ENCODE measurements at regions of chr22 and their contacts with region 1.

Region 1: DNA sequence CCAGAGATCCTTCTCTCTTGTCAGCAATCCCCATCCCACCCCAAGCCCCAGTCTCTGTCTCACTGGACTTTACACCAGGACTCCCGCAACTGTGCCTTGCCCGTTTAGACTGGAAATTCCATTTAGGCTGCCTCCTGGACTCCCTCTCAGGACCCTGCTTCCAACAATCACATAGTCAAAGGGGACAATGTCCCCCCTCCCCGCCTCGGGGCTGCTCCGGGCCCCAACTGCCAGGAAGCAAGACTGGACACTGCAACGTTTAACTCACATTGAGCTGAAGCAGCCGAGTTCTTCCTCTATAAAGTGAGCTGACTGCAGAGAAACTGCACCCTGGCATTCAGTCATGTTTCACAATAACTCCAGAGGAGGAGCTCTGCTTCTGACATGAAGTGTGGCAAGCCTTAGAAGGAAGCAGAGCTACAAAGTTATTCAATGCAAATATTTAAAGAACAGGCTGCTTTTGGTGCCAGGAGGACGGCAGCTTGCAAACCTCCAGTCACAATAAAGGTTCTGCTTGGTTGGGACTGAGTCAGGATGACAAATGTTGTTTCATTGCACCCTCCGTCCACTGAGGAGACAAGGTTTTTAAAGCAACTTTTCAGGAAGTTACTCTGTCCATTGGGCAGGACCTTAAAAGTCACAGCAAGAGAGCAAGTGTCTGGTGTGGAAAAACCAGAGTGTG is 19.9 kb downstream of the PACSIN2 start:
- DNase-seq: peak; percentile 98
- ATAC-seq: peak; percentile 72
- H3K4me3 ChIP-seq: peak overlapping the region; percentile 47 to 81 (median 64)
- H3K27ac ChIP-seq: peak overlapping the region; percentile 100
- H3K4me1 ChIP-seq: peaks cover 96% of the 10 kb centered on the region
- H3K27me3 ChIP-seq: no peaks in the 10 kb centered on the region
- CTCF ChIP-seq: peak; percentile 20; the same call in 1 of the 2 replicates
- EP300 ChIP-seq: peak in 1 of 2 experiments; percentile 90; a peak in 2 of 4 replicates
- POLR2A ChIP-seq: peak; percentile 37 to 86; a peak in 3 of 4 replicates
- RAD21 ChIP-seq: 0 out of 2 replicates have a peak, but pooled peaks have one; percentile 4

Region 2: GRCh38 chr22:42947211-42947990 is 47.6 kb before region 1 on chr22:
- CTCF ChIA-PET with region 1: no interaction called
- POLR2A ChIA-PET with region 1: interaction called, 13 read pairs
- in situ Hi-C with region 1: loop called (anchors 5 kb)
- intact Hi-C with region 1: loop called (anchors 10 kb)
- DNase-seq: peak; percentile 87
- ATAC-seq: peak; percentile 80
- H3K4me3 ChIP-seq: peak overlapping the region in 1 of 3 experiments; percentile 7; a peak in 2 of 6 replicates
- H3K27ac ChIP-seq: peak overlapping the region; percentile 57
- H3K4me1 ChIP-seq: peaks cover 70% of the 10 kb centered on the region
- H3K27me3 ChIP-seq: no peaks in the 10 kb centered on the region
- CTCF ChIP-seq: 0 out of 2 replicates have a peak, but pooled peaks have one; percentile 3
- EP300 ChIP-seq: peak in 1 of 2 experiments; percentile 67; a peak in 2 of 4 replicates
- POLR2A ChIP-seq: no peak
- RAD21 ChIP-seq: no peak

Region 3: GRCh38 chr22:42964994-42965699 is 29.9 kb before region 1 on chr22:
- CTCF ChIA-PET with region 1: no interaction called
- POLR2A ChIA-PET with region 1: interaction called, 45 read pairs
- in situ Hi-C with region 1: no loop called
- intact Hi-C with region 1: no loop called
- DNase-seq: peak; percentile 77
- ATAC-seq: peak; percentile 36
- H3K4me3 ChIP-seq: no peak overlapping the region
- H3K27ac ChIP-seq: peak overlapping the region; percentile 19
- H3K4me1 ChIP-seq: peaks cover 82% of the 10 kb centered on the region
- H3K27me3 ChIP-seq: no peaks in the 10 kb centered on the region
- CTCF ChIP-seq: no peak
- EP300 ChIP-seq: peak in 1 of 2 experiments; percentile 59; a peak in 2 of 4 replicates
- POLR2A ChIP-seq: no peak
- RAD21 ChIP-seq: no peak

Region 4: GRCh38 chr22:42978453-42979103 is 16.4 kb before region 1 on chr22:
- CTCF ChIA-PET with region 1: no interaction called
- POLR2A ChIA-PET with region 1: interaction called, 17 read pairs
- in situ Hi-C with region 1: no loop called
- intact Hi-C with region 1: loop called (anchors 2 kb)
- DNase-seq: no peak
- ATAC-seq: peak; percentile 43; the same call in 1 of the 3 replicates
- H3K4me3 ChIP-seq: no peak overlapping the region
- H3K27ac ChIP-seq: no peak overlapping the region
- H3K4me1 ChIP-seq: peaks cover 57% of the 10 kb centered on the region
- H3K27me3 ChIP-seq: no peaks in the 10 kb centered on the region
- CTCF ChIP-seq: no peak
- EP300 ChIP-seq: no peak
- POLR2A ChIP-seq: no peak
- RAD21 ChIP-seq: no peak

Region 5: DNA sequence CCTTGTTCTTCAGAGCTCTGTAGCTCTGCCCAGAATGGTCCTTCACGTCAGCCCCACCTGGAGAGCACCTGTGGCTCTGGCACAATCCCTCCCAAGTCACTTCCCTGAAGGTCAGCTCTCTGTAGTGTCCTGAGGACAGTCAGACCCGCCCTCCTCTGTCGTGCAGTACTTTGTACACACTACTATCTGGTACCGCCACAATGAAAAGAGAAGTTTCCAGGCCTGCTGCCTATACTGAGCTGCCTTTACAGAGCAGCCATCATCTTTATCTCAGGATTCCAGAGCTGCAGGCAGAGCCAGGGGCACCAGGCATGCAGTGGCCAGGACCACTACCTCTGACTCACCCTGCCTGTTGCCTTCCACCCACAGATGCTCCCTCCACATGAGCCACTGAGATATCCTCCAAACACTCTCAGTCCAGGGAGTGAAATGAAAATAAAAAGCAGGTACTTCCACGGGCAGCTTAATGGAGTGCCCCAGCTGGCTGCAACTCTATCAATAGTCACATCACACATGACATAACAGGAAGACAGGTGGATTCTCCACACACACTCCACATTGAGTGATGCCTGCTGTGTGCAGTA is 12.6 kb after region 1 on chr22:
- CTCF ChIA-PET with region 1: no interaction called
- POLR2A ChIA-PET with region 1: interaction called, 185 read pairs
- in situ Hi-C with region 1: no loop called
- intact Hi-C with region 1: no loop called
- DNase-seq: peak; percentile 65
- ATAC-seq: peak; percentile 85
- H3K4me3 ChIP-seq: peak overlapping the region in 1 of 3 experiments; percentile 11; a peak in 1 of 6 replicates
- H3K27ac ChIP-seq: peak overlapping the region; percentile 35
- H3K4me1 ChIP-seq: peaks cover 97% of the 10 kb centered on the region
- H3K27me3 ChIP-seq: no peaks in the 10 kb centered on the region
- CTCF ChIP-seq: no peak
- EP300 ChIP-seq: no peak
- POLR2A ChIP-seq: no peak
- RAD21 ChIP-seq: no peak

Region 6: DNA sequence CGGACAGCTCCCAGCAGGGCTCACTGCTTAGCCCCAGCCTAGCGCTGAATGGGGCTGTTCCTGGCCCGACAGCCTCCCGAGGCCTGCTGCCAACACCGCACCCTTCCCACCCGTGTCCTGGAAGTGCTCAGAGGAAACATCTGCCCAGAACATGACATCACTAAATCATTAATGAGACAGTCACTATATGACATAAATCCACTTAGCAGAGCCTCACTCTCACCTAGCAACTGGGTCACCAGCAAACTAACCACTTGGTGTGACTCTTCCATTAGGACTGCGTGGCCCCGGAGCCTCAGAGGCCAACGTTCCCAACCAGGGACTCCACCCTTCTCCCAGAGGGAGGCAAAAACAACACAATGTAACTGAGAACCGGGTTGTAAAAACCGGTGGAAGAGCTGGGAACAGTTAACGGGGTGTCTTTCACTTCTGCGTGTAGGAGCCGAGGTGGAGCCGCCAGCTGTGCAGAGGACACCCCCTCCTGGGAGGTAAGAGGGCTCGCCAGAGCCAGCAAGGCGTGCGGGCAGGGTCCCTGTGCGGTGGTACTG is 41.3 kb after region 1 on chr22:
- CTCF ChIA-PET with region 1: no interaction called
- POLR2A ChIA-PET with region 1: interaction called, 4 read pairs
- in situ Hi-C with region 1: no loop called
- intact Hi-C with region 1: loop called (anchors 5 kb)
- DNase-seq: no peak
- ATAC-seq: no peak
- H3K4me3 ChIP-seq: no peak overlapping the region
- H3K27ac ChIP-seq: no peak overlapping the region
- H3K4me1 ChIP-seq: peaks cover 52% of the 10 kb centered on the region
- H3K27me3 ChIP-seq: peaks cover 2 to 4% of the 10 kb centered on the region in 2 experiments; a peak in 3 of 5 replicates
- CTCF ChIP-seq: no peak
- EP300 ChIP-seq: no peak
- POLR2A ChIP-seq: no peak
- RAD21 ChIP-seq: no peak

Measured in HepG2 (cell line).